Activated CD4-positive, alpha-beta memory T cell treated with anti-CD3 and anti-CD28 coated beads, Interleukin-2, amount 10 ng/mL, durations not matched to agents 7 days and 5 days (primary cell): ENCODE measurements at regions of chr5 and their contacts with region 1.

Region 1: GRCh38 chr5:123423278-123424149 is at the start of gene CEP120:
- DNase-seq: peak; percentile 98
- H3K4me3 Mint-ChIP-seq: no peak within 1 kb of the TSS
- H3K27ac Mint-ChIP-seq: no peak within 1 kb of the TSS
- H3K4me1 Mint-ChIP-seq: peaks cover 24% of the 10 kb centered on the region
- H3K27me3 Mint-ChIP-seq: no peaks in the 10 kb centered on the region
- total RNA-seq, gene CEP120: 35.2 to 36.6 TPM

Region 2: GRCh38 chr5:122774861-122775549 is 648.5 kb before region 1 on chr5 and contains the start of gene SNX2:
- CTCF ChIA-PET with region 1: interaction called, 3 read pairs
- POLR2A ChIA-PET with region 1: interaction called, 11 read pairs
- DNase-seq: peak; percentile 89
- H3K4me3 Mint-ChIP-seq: peak within 1 kb of the TSS; percentile 88
- H3K27ac Mint-ChIP-seq: peak within 1 kb of the TSS; percentile 87
- H3K4me1 Mint-ChIP-seq: peaks cover 33% of the 10 kb centered on the region
- H3K27me3 Mint-ChIP-seq: peaks cover 14% of the 10 kb centered on the region
- total RNA-seq, gene SNX2: 52.7 to 53.0 TPM

Region 3: GRCh38 chr5:123125953-123126734 is 297.4 kb before region 1 on chr5:
- CTCF ChIA-PET with region 1: no interaction called
- POLR2A ChIA-PET with region 1: no interaction called
- DNase-seq: no peak
- H3K4me3 Mint-ChIP-seq: no peak overlapping the region
- H3K27ac Mint-ChIP-seq: no peak overlapping the region
- H3K4me1 Mint-ChIP-seq: no peaks in the 10 kb centered on the region
- H3K27me3 Mint-ChIP-seq: peaks cover 20% of the 10 kb centered on the region

Region 4: DNA sequence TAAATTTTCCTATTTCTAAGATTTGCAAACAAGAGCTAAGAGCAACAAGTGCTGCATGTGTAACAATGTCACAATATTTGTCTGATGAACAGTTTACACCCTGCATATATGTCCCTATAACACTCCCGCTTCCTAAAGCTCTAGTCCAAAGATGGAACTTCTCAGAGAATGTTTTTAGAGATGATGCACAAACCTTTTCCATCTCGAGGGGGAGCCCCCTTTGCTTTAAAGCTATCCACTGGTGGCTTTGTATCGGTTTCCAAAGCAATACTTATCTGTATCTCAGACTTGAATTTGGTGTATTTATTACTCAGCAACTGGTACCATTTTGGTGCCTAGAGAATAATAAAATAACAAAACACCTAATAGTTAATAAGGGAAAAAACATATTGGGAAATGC is 11.3 kb before region 1 on chr5:
- CTCF ChIA-PET with region 1: interaction called, 13 read pairs
- POLR2A ChIA-PET with region 1: interaction called, 4 read pairs
- DNase-seq: no peak
- H3K4me3 Mint-ChIP-seq: no peak overlapping the region
- H3K27ac Mint-ChIP-seq: no peak overlapping the region
- H3K4me1 Mint-ChIP-seq: peaks cover 2% of the 10 kb centered on the region
- H3K27me3 Mint-ChIP-seq: no peaks in the 10 kb centered on the region

Region 5: GRCh38 chr5:123438902-123439301 is 15.4 kb after region 1 on chr5:
- CTCF ChIA-PET with region 1: interaction called, 26 read pairs
- POLR2A ChIA-PET with region 1: interaction called, 34 read pairs
- DNase-seq: peak; percentile 39
- H3K4me3 Mint-ChIP-seq: no peak overlapping the region
- H3K27ac Mint-ChIP-seq: peak overlapping the region; percentile 32
- H3K4me1 Mint-ChIP-seq: peaks cover 34% of the 10 kb centered on the region
- H3K27me3 Mint-ChIP-seq: no peaks in the 10 kb centered on the region

Region 6: GRCh38 chr5:123505633-123506032 is 82.1 kb after region 1 on chr5:
- CTCF ChIA-PET with region 1: interaction called, 8 read pairs
- POLR2A ChIA-PET with region 1: interaction called, 102 read pairs
- DNase-seq: no peak
- H3K4me3 Mint-ChIP-seq: no peak overlapping the region
- H3K27ac Mint-ChIP-seq: no peak overlapping the region
- H3K4me1 Mint-ChIP-seq: peaks cover 3% of the 10 kb centered on the region
- H3K27me3 Mint-ChIP-seq: peaks cover 24% of the 10 kb centered on the region

Region 7: GRCh38 chr5:123518111-123518510 is 94.6 kb after region 1 on chr5:
- CTCF ChIA-PET with region 1: interaction called, 8 read pairs
- POLR2A ChIA-PET with region 1: interaction called, 102 read pairs
- DNase-seq: no peak
- H3K4me3 Mint-ChIP-seq: no peak overlapping the region
- H3K27ac Mint-ChIP-seq: no peak overlapping the region
- H3K4me1 Mint-ChIP-seq: peaks cover 52% of the 10 kb centered on the region
- H3K27me3 Mint-ChIP-seq: no peaks in the 10 kb centered on the region

Region 8: GRCh38 chr5:123610665-123611405 is 187.3 kb after region 1 on chr5:
- CTCF ChIA-PET with region 1: interaction called, 22 read pairs
- POLR2A ChIA-PET with region 1: interaction called, 24 read pairs
- DNase-seq: no peak
- H3K4me3 Mint-ChIP-seq: no peak overlapping the region
- H3K27ac Mint-ChIP-seq: no peak overlapping the region
- H3K4me1 Mint-ChIP-seq: peaks cover 14% of the 10 kb centered on the region
- H3K27me3 Mint-ChIP-seq: no peaks in the 10 kb centered on the region

Region 9: DNA sequence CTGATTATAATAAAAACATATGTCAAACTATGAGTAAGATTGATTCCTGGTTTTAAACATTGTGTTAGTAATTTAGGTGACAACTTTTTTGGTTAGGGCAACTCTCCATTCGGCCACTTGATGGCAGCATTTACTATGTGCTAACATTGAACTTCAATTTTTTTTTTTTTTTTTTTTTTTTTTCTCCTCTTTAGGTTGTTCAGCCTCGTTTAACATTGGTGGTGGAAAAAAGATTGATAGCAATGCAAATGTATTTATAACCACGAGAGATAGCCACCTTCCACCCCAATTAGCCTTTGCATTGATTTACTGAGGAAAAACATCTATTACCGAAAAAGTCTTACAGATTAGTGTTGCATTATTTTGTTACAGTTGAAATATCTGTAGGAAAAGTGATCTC is 247.5 kb after region 1 on chr5:
- CTCF ChIA-PET with region 1: no interaction called
- POLR2A ChIA-PET with region 1: no interaction called
- DNase-seq: peak; percentile 43
- H3K4me3 Mint-ChIP-seq: no peak overlapping the region
- H3K27ac Mint-ChIP-seq: no peak overlapping the region
- H3K4me1 Mint-ChIP-seq: no peaks in the 10 kb centered on the region
- H3K27me3 Mint-ChIP-seq: no peaks in the 10 kb centered on the region